Spleen (tissue), 13 donors: ENCODE measurements at regions of chr15 and their contacts with region 1.

Region 1: DNA sequence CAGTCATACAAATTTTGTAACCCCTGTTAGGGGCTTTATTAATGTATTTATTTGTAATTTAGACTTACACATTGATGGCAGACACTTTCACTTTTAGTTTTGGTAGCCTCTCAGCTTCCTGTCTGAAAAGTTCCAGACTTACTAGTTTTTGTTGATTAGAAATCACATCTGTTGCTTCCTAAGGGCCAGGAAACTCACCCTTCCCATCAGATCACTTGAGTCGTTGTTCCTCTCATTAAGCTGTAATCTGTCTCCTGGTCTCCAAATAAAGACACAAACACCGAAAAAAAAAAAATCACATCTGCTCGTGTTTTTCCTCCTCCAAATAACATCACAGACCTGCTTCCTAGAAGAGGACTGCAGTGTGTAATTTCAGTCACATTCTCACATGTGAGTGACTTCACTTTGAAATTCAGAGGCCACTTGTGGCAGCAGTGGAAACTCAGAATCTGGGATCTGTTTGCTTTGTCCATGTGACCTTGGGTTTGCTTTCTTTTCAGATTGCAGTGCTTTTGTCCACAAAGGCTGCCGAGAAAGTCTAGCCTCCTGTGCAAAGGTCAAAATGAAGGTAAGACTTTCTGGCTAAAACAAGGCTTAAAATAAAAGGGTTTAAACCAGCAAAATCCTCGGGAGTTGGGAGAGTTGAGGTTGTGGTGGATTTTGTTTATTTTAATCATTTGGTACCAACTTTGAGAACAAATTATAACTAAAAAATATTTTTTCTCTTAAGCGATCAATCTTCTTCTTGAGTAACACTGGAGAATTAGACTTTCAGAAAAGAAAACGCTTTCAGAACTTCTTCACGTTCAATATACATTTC is 87.0 kb downstream of the KLHL25 start:
- DNase-seq: no peak
- H3K4me3 ChIP-seq: peak overlapping the region in 6 of 8 donors; percentile 2 to 49 (median 14)
- H3K27ac ChIP-seq: peak overlapping the region; percentile 75 to 93 (median 90)
- H3K4me1 ChIP-seq: peaks cover 41 to 100% (median 77%) of the 10 kb centered on the region in 6 donors
- H3K27me3 ChIP-seq: no peaks in the 10 kb centered on the region
- CTCF ChIP-seq: no peak
- POLR2A ChIP-seq: no peak

Region 2: DNA sequence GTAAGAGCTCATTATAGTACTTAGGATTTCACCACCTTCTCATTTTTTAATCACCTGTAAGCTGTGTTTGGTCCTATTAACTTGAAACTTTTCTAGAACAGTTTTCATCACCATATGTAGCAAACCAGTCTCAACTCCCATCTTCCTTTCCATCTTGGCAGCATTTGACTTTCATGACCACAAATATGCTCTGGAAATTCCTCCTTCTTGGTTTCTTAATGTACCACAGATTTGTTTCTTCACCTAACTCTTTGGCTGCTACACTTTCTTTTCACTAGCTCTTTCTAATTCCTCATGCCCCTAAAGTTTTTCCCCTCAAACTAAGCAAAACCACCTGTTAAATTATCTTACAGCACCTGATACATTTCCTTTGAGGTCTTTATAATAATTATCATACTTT is 1036.5 kb before region 1 on chr15:
- intact Hi-C with region 1: no loop called
- DNase-seq: no peak
- H3K4me3 ChIP-seq: no peak overlapping the region
- H3K27ac ChIP-seq: no peak overlapping the region
- H3K4me1 ChIP-seq: peaks cover 0 to 9% (median 3%) of the 10 kb centered on the region in 6 donors
- H3K27me3 ChIP-seq: no peaks in the 10 kb centered on the region
- CTCF ChIP-seq: no peak
- POLR2A ChIP-seq: no peak

Region 3: DNA sequence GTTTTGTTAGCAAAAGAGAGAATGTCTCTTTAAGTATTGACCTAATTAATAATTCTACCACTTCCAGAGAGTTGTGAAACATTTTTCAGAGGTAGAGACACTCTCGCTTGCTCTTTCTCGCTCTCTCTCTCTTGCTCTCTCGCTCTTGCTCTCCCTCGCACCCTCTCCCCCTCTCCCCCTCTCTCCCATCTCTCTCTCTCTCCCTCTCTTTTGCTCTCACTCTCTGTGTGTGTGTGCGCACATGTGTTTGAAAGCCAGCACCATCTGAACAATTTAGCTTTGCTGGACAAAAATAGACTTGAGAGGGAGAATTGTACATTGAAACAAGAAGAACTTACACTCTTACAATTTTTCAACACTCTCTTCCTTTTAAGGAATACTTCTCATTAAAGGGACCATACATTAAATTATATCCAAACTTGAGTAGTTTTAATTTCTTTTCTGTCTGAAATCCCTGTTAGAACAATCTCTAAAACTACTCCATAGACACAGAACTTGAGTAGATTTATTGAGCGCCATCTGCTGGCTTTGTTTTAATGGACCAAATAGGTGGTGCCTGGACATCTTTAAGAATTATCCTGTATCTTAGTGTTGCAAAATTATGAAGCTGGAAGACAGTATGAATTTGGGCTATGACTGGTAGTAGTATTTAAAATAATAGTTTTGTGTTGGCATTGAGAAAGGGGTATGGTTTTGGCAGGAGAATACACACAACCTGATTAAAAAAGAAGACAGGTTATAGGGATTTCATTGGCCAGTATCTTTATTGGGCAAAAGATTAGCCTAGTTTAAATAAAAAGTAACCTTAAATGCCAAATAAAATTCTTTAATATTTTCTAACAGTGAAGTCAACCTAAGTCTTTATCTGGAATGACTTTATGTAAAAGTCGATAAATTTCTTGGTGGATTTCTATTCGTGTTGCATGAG is 202.7 kb before region 1 on chr15:
- intact Hi-C with region 1: no loop called
- DNase-seq: no peak
- H3K4me3 ChIP-seq: no peak overlapping the region
- H3K27ac ChIP-seq: peak overlapping the region in 1 of 8 donors; percentile 22
- H3K4me1 ChIP-seq: peaks cover 0 to 63% (median 15%) of the 10 kb centered on the region in 6 donors
- H3K27me3 ChIP-seq: no peaks in the 10 kb centered on the region
- CTCF ChIP-seq: peak in 10 of 11 experiments; percentile 24 to 68 (median 56)
- POLR2A ChIP-seq: no peak

Region 4: GRCh38 chr15:85625856-85626255 is 81.9 kb before region 1 on chr15:
- intact Hi-C with region 1: loop called (anchors 10 kb)
- DNase-seq: no peak
- H3K4me3 ChIP-seq: peak overlapping the region in 1 of 8 donors; percentile 63
- H3K27ac ChIP-seq: peak overlapping the region in 7 of 8 donors; percentile 63 to 83 (median 74)
- H3K4me1 ChIP-seq: peaks cover 42 to 98% (median 75%) of the 10 kb centered on the region in 6 donors
- H3K27me3 ChIP-seq: no peaks in the 10 kb centered on the region
- CTCF ChIP-seq: no peak
- POLR2A ChIP-seq: no peak